Posterior vena cava (tissue), 2 donors: ENCODE measurements at regions of chr17 and their contacts with region 1.

Region 1: DNA sequence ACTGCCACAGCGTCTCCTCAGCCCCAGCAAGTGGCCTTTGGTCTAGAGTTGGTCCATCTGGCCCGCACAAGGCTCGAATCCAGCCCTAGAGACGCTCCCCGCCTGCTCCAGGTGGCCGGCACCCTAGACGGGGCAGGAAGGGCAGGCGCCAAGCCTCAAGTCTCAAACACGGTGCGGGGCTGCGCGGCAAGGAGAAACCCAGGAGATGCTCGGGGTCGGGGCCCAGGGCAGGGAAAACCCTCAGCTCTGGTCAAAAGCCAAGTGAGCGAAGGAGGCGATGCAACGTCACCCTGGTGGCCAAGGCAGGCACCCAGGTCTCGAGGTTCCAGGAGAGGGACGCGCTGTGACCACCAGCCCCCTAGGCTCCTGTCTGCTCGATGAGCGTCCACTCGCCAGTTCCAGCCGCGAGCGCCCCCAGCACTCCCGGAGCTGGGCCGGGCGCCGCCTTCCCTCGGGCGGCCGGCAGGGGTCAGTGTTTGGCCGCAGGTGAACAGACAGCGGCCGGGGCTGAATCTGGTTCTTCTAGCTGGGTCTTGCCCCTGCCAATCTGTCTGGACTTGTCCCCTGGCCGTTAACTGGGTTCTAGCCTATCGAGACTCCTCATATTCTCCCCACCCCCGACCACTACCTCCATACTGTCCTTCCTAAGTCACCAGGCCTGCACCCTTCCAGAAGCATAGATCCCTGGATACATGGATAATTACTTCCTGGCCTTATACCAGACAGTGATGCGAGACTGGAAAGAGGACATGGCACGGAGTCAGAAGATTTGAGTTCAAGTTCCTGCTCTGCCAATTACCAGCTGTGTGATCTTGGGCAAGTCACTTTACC is 44.0 kb downstream of the PRAC1 start:
- DNase-seq: peak; percentile 87

Region 2: GRCh38 chr17:48724251-48725003 is 46.1 kb after region 1 on chr17:
- intact Hi-C with region 1: loop called in 1 of 2 experiments (anchors 2 kb)
- DNase-seq: peak; percentile 96